ENCODE measurements at regions of chr12 and their contacts with region 1.

Region 1: GRCh38 chr12:55659486-55660385 is 23.0 kb downstream of the OR10P1 start:
- DNase-seq: no peak
- H3K4me3 ChIP-seq: no peak overlapping the region
- CTCF ChIP-seq: peak; percentile 46

Region 2: GRCh38 chr12:55188974-55189556 is 470.7 kb before region 1 on chr12:
- CTCF ChIA-PET with region 1: interaction called, 29 read pairs
- POLR2A ChIA-PET with region 1: no interaction called
- DNase-seq: peak; percentile 26
- H3K4me3 ChIP-seq: no peak overlapping the region
- CTCF ChIP-seq: peak; percentile 53

Region 3: DNA sequence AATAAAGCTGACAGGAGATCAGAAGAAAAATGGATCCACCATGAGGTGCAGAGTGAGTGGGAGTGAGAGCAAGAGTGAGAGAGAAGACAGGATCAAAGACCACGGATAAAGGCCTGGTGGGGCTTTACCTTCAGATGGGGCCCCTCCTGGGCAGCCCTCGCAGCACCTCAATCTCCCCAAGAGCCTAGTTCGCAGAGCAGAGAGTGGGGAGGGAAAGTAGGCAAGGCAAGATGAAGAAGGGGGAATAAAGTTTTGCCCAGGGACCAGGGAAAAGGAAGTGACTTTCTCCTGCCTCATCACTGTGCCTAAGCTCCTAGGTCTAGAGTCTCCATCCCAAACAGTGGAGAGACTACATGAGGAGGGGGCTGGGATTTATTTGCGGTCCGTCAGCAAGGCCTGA is 12.7 kb before region 1 on chr12:
- CTCF ChIA-PET with region 1: interaction called, 86 read pairs
- POLR2A ChIA-PET with region 1: no interaction called
- DNase-seq: no peak
- H3K4me3 ChIP-seq: no peak overlapping the region
- CTCF ChIP-seq: no peak

Region 4: DNA sequence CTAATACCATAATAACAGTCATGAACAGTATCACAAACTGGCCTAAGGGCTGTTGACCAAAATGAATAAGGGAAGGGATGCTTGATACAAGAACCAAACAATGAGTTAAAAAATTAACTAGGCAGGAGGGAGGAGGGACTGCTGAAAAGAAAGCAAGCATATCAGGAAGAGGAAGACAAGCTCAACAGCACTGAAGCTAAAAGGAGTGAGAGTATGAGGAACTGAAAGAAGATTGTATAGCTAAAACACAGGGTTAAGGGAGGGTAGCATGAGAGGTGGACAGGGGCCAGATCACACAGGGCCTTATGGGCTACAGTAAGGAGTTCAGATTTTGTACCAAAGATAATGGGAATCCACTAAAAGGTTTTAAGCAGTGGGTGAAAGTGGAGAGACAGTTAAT is 13.9 kb after region 1 on chr12:
- CTCF ChIA-PET with region 1: interaction called, 44 read pairs
- POLR2A ChIA-PET with region 1: no interaction called
- DNase-seq: no peak
- H3K4me3 ChIP-seq: no peak overlapping the region
- CTCF ChIP-seq: no peak

Region 5: DNA sequence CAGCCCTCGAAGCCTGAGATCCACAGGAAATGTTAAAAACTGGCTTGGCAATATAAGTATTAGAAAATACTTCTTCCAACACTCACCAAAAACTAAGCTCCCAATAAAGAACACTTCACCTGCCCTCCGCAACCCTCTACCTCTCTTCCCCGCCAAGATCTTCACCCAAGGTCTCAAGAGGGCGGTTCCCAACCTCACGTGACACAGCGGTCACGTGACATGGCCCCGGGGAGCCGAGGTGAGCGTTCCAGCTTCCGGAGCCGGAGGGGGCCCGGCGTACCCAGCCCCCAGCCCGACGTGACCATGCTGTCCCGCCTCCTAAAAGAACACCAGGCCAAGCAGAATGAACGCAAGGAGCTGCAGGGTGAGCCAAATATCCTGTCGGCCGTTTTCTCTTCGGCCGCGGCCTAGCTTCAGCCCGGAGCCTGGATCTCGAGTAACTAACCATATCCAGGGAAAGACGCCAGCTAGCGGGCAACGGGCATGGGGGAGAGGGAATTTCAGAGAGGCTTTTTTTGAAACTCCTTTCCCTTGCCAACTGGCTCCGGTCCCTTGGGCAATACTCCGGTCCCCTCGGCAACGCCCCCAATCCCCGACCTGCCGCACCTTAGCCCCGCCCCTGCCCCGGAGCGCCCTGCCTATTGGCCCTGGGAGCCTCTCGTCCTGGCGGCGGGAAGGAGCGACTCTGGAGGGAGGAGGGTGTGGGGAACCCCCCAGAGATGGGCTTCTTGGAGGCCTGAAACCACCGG is 56.3 kb after region 1 on chr12 and contains the start of gene BLOC1S1:
- CTCF ChIA-PET with region 1: interaction called, 12 read pairs
- POLR2A ChIA-PET with region 1: no interaction called
- DNase-seq: no peak
- H3K4me3 ChIP-seq: peak within 1 kb of the TSS; percentile 81
- CTCF ChIP-seq: no peak

Measured in AG04449 (cell line).